Mammary epithelial cell (primary cell): ENCODE measurements at regions of chr18 and their contacts with region 1.

Region 1: GRCh38 chr18:5295981-5296705 is 617 bp upstream of the ZBTB14 start:
- DNase-seq: peak; percentile 91
- H3K4me3 ChIP-seq: peak overlapping the region; percentile 69 to 84 (median 76)
- H3K27ac ChIP-seq: peak overlapping the region; percentile 68
- H3K4me1 ChIP-seq: peaks cover 15% of the 10 kb centered on the region
- H3K27me3 ChIP-seq: no peaks in the 10 kb centered on the region
- CTCF ChIP-seq: no peak

Region 2: DNA sequence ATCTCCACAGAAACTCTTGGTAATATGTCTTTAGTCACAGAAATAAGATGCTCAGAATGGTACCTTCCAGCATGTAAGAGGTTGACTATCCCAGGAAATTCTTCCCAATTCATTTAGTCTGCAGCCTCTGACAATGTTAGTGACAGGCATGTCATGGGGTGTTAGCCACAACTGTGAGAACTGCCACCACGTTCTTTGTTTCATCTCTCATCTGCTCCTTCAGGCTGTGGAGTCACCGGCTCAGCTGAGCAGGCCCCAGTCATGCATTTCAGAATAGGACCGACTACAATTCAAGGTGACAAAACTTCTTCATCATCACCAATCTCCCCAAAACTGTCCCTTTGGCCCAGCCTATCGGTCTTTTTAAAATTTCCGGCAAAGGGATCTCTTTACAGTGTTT is 266.6 kb before region 1 on chr18:
- CTCF ChIA-PET with region 1: no interaction called
- dilution Hi-C with region 1: no loop called
- in situ Hi-C with region 1: no loop called
- intact Hi-C with region 1: no loop called
- DNase-seq: no peak
- H3K4me3 ChIP-seq: no peak overlapping the region
- H3K27ac ChIP-seq: no peak overlapping the region
- H3K4me1 ChIP-seq: no peaks in the 10 kb centered on the region
- H3K27me3 ChIP-seq: no peaks in the 10 kb centered on the region
- CTCF ChIP-seq: no peak

Region 3: GRCh38 chr18:5237723-5238370 is 58.3 kb before region 1 on chr18:
- CTCF ChIA-PET with region 1: no interaction called
- dilution Hi-C with region 1: loop called (anchors 10 kb)
- in situ Hi-C with region 1: no loop called
- intact Hi-C with region 1: loop called (anchors 1 kb)
- DNase-seq: peak; percentile 92
- H3K4me3 ChIP-seq: peak overlapping the region; percentile 60 to 94 (median 65)
- H3K27ac ChIP-seq: peak overlapping the region; percentile 87
- H3K4me1 ChIP-seq: peaks cover 7% of the 10 kb centered on the region
- H3K27me3 ChIP-seq: no peaks in the 10 kb centered on the region
- CTCF ChIP-seq: peak in 1 of 2 donors; percentile 28